Left cardiac atrium (tissue), 4 donors: ENCODE measurements at regions of chr3 and their contacts with region 1.

Region 1: DNA sequence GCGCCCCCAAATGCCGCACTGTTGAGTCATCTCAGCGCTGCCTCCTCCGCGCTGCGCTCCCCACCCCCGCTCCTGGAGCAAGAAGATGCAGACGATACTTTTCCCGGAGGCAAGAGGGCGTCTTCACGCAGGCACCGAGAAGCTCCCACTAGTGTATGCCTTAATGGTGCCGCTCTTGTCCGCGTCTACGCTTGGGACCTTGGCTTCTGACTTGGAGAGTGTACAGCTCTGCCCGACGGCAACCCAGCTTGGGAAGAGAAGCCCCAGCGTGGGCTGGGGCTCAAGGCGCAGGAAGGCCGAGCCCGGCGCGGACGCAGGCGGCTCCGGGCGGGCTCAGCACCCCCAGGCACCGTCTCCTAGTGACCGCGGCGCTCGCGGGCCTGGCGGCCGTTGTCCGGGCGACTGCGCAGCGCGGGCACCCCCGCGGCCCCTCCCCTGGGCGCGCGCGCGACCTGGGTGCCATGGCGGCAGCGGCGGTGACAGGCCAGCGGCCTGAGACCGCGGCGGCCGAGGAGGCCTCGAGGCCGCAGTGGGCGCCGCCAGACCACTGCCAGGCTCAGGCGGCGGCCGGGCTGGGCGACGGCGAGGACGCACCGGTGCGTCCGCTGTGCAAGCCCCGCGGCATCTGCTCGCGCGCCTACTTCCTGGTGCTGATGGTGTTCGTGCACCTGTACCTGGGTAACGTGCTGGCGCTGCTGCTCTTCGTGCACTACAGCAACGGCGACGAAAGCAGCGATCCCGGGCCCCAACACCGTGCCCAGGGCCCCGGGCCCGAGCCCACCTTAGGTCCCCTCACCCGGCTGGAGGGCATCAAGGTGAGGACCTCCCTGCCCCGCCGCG is at the start of gene P4HTM:
- DNase-seq: peak; percentile 92
- ATAC-seq: peak; percentile 92
- total RNA-seq, gene P4HTM: 32.8 to 33.9 TPM

Region 2: GRCh38 chr3:49445381-49445780 is 455.4 kb after region 1 on chr3:
- intact Hi-C with region 1: loop called (anchors 5 to 10 kb)
- DNase-seq: no peak
- ATAC-seq: no peak